ENCODE measurements at regions of chr21 and their contacts with region 1.

Region 1: GRCh38 chr21:46285761-46286496 is at the start of gene YBEY:
- DNase-seq: peak; percentile 69 to 95 (median 92)

Region 2: DNA sequence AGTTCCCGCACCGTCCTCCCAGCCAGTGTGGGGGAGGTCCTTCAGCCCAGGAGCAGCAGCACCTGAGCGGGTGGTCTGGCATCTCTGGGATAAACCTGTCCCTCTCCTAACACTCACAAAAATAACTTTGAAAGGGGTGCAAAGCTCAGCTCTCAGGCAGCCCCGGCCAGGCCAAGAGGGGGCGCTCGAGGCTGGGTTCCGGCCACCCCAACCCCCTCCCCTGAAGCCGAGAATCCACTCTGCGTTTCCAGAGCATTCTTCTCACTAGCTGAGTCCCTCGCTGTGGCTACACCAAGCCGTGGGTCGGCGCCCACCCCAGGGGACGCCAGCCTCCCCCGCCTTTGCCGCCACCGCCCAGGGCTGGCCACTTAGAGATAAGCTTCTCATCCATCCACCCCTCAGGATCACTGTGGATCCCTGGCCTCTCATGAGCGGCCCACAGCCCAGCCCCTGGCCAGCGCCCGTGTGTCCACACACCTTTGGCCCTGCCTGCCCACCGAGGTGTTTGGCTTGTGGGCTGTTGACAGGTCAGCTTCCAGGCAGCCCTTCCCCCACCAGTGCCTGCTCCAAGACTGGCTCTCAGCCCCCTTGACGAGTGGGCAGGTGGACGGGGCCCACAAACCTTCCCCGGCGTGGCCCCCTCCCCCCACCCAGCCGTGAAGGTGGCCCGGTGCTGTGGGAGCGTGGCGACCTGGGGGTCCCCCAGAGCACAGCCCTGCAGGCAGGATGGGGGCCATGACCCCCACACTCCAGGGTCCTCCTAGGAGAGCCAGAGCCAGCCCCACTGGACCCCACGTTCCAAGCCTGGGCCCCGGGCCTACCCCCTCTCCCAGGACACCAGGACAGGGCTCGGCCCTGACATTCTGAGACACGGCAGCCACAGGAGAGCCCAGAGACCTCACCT is 132.4 kb before region 1 on chr21:
- intact Hi-C with region 1: no loop called
- DNase-seq: peak in 40 of 42 donors; percentile 17 to 87 (median 58)

Region 3: DNA sequence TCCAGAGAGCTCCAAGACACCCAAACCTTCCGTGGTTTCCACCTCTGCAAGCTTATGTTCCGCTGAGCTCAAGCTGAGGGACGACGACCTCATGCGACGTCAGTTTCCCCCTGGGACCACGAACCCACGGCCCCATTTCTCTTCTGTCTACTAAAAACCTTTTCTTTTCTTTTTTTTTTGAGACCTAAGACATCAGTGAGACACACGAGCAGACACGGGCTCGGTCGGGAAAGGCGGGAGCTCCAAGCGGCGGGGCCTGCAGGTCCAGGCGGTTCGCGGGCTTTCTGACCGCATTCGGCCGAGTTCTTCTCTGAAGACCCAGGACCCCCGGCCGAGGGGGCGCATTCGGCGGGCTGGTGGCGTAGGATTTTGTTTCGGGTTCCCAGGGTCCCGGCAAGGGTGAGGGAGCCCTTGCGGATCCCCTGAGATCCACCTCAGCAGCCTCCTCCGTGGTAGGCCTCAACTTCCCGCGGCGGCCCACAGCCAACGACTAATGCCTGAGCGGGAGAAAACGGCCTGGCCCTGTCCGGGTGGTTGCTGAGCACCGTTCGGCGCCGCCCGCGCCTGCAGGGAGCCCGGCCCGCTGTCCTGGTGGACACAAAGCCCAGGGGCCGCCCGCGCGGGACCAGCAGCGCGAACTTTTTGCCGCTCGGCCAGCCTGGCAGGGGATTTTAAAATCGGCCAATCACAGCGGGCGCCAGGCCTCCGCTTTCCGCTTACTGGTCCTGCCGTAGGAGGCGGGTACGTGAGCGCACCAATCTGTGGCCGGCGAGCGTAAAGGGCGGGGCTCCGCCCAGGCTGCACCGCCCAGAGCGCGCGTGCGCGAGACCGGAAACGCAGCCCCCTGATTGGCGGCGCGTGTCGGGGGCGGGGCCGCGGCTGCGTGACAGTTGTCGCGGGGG is 37.5 kb after region 1 on chr21 and contains the start of gene C21orf58:
- intact Hi-C with region 1: loop called (anchors 5 kb)
- DNase-seq: peak; percentile 96 to 99 (median 98)

Measured in head of caudate nucleus (tissue), 42 donors.